Calu3 (cell line): ENCODE measurements at regions of chr14 and their contacts with region 1.

Region 1: GRCh38 chr14:70391493-70392391 is 25.1 kb downstream of the SYNJ2BP start:
- DNase-seq: no peak
- H3K4me3 Mint-ChIP-seq: no peak overlapping the region
- H3K27ac Mint-ChIP-seq: no peak overlapping the region
- H3K4me1 Mint-ChIP-seq: no peaks in the 10 kb centered on the region
- H3K27me3 Mint-ChIP-seq: no peaks in the 10 kb centered on the region
- CTCF ChIP-seq: no peak

Region 2: DNA sequence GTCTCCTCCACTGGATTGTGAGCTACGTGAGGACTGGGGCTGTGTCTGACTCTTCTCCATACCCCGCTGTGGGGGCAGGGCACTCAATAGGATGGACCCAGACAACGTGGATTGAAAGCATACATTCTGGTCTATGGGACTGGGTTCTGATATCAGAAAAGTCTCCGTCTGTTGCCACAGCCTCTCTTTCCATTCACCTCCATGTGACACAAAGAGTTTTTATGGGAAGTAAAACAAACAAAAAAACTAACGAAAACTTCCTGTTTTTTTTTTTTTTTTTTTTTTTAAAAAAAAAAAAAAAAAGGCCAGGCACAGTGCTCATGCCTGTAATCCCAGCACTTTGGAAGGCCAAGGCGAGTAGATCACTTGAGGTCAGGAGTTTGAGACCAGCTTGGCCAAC is 247.7 kb before region 1 on chr14:
- CTCF ChIA-PET with region 1: interaction called, 11 read pairs
- intact Hi-C with region 1: no loop called
- DNase-seq: no peak
- H3K4me3 Mint-ChIP-seq: no peak overlapping the region
- H3K27ac Mint-ChIP-seq: no peak overlapping the region
- H3K4me1 Mint-ChIP-seq: no peaks in the 10 kb centered on the region
- H3K27me3 Mint-ChIP-seq: peaks cover 97% of the 10 kb centered on the region
- CTCF ChIP-seq: no peak

Region 3: GRCh38 chr14:70254476-70254961 is 137.2 kb before region 1 on chr14:
- CTCF ChIA-PET with region 1: no interaction called
- intact Hi-C with region 1: no loop called
- DNase-seq: peak; percentile 65
- H3K4me3 Mint-ChIP-seq: peak overlapping the region; percentile 65
- H3K27ac Mint-ChIP-seq: no peak overlapping the region
- H3K4me1 Mint-ChIP-seq: no peaks in the 10 kb centered on the region
- H3K27me3 Mint-ChIP-seq: peaks cover 64% of the 10 kb centered on the region
- CTCF ChIP-seq: no peak